H1 (cell line): ENCODE measurements at regions of chr9 and their contacts with region 1.

Region 1: GRCh38 chr9:98255578-98256296 is at the start of gene TBC1D2:
- DNase-seq: peak; percentile 82 to 99
- H3K4me3 ChIP-seq: peak within 1 kb of the TSS; percentile 80 to 93 (median 88)
- H3K27ac ChIP-seq: peak within 1 kb of the TSS; percentile 94
- H3K4me1 ChIP-seq: peaks cover 0 to 4% (median 1%) of the 10 kb centered on the region in 4 experiments; a peak in 5 of 7 replicates
- H3K27me3 ChIP-seq: no peaks in the 10 kb centered on the region
- CTCF ChIP-seq: no peak
- EP300 ChIP-seq: no peak
- POLR2A ChIP-seq: no peak; a peak in 1 of 3 replicates
- RAD21 ChIP-seq: no peak
- total RNA-seq, gene TBC1D2: 7.4 and 8.0 TPM in 2 replicates

Region 2: DNA sequence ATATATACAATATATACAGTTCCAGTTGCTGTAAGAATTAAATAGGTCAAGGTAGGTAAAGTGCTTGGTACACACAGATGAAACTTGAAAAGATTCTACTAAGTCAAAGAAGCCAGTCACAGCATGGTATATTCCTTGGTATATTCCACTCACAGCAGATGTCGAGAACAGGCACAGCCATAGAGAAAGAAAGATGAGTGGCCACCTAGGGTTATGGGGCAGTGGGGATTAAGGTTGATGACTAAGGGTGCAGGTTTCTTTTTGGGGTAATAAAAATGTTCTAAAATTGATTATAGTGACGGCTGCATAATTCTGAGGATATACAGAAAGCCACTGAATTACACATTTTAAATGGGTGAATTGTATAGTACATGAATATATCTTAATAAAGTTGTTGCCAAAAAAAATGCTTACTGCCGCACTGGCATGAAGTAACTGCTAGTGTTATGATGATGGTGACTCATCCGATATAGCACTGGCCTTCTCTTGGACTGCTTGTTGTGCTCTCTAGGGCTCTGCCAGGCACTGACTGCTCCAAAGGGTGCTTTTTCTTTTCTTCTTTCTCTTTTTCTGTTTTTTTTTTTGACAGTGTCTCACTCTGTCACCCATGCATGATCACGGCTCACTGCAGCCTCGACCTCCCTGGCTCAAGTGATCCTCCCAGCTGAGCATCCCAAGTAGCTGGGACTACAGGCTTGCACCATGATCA is 23.8 kb before region 1 on chr9:
- CTCF ChIA-PET with region 1: interaction called, 27 read pairs
- POLR2A ChIA-PET with region 1: interaction called, 5 read pairs
- DNase-seq: no peak
- H3K4me3 ChIP-seq: no peak overlapping the region
- H3K27ac ChIP-seq: no peak overlapping the region
- H3K4me1 ChIP-seq: no peaks in the 10 kb centered on the region
- H3K27me3 ChIP-seq: no peaks in the 10 kb centered on the region
- CTCF ChIP-seq: no peak
- EP300 ChIP-seq: no peak
- POLR2A ChIP-seq: no peak
- RAD21 ChIP-seq: no peak

Region 3: GRCh38 chr9:98276907-98277469 is 21.3 kb after region 1 on chr9:
- CTCF ChIA-PET with region 1: no interaction called
- POLR2A ChIA-PET with region 1: no interaction called
- DNase-seq: no peak
- H3K4me3 ChIP-seq: no peak overlapping the region
- H3K27ac ChIP-seq: no peak overlapping the region
- H3K4me1 ChIP-seq: no peaks in the 10 kb centered on the region; a peak in 1 of 7 replicates
- H3K27me3 ChIP-seq: no peaks in the 10 kb centered on the region
- CTCF ChIP-seq: no peak
- EP300 ChIP-seq: no peak
- POLR2A ChIP-seq: no peak
- RAD21 ChIP-seq: no peak

Region 4: DNA sequence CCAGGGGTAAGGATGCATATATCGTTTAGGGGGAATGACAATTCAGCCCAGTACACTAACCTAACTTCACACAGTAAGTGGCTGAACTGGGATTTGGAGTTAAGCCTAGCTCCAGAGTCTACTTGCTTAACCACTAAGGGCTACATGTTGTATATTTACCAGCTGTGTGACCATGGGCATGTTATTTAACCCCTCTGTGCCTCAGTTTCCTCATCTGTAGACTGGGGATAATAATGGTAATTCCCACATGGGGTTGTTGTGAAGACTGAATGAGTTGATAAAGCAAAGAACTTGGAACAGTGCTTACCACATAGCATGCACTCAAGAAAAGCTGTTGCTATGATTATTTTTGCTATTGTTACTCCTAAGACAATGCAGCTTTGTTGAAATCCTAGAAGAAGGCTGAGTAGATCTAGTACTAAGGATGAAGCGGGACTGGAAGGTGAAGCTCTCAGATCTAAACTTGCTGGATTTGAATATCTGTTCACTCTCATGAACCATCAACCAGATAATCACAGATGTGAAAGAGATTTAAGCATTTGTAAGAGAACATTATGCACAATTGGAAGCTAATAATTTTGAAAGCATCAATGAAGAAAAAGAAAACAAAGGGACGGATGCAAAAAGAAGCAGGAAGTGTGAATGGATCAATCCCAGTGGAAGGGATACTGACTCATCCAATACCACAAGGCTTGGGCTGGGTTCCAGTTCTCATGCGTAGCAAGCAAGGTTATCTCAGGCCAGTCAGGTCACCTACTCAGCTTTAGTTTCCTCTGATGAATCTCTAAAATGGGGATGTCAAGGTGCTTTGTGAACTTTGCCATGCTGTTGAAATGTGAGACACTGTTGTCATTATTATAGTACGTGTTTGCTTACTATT is 78.2 kb after region 1 on chr9:
- CTCF ChIA-PET with region 1: no interaction called
- POLR2A ChIA-PET with region 1: no interaction called
- DNase-seq: no peak
- H3K4me3 ChIP-seq: no peak overlapping the region
- H3K27ac ChIP-seq: no peak overlapping the region
- H3K4me1 ChIP-seq: no peaks in the 10 kb centered on the region
- H3K27me3 ChIP-seq: no peaks in the 10 kb centered on the region; a peak in 1 of 7 replicates
- CTCF ChIP-seq: no peak
- EP300 ChIP-seq: no peak
- POLR2A ChIP-seq: no peak
- RAD21 ChIP-seq: no peak